Left ventricle myocardium superior (tissue), 1 donor: ENCODE measurements at regions of chr19 and their contacts with region 1.

Region 1: DNA sequence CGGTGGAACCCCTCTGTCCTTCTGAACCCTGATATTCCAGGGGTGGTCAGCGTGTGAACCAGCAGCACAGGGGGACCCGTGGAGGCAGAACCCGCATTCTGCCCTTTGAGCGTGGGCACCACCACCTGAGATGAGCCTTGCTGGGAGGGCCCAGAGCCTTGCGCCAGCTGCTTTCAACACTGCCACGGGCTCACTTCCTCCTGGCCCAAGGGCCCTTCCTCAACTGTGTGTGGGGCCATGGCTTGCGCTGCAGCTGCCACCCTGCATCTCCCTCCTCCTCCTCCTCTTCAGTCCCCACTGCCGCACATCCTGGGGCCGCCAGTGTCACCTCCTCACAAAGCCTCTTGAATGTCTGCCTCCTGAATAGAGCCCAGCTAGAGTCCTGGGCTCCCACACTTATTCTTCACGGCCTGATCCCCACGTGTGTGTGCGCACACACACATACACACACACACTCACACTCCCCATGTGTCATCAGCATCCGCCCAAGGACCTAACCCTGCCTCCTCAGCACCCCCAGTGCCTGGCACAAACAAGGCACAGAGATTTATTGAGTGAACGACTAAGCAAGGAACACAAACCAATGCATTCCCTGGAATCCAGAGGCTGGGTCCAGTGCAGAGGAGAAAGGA is 26.9 kb upstream of the TMEM160 start:
- DNase-seq: peak; percentile 45
- ATAC-seq: peak; percentile 12

Region 2: DNA sequence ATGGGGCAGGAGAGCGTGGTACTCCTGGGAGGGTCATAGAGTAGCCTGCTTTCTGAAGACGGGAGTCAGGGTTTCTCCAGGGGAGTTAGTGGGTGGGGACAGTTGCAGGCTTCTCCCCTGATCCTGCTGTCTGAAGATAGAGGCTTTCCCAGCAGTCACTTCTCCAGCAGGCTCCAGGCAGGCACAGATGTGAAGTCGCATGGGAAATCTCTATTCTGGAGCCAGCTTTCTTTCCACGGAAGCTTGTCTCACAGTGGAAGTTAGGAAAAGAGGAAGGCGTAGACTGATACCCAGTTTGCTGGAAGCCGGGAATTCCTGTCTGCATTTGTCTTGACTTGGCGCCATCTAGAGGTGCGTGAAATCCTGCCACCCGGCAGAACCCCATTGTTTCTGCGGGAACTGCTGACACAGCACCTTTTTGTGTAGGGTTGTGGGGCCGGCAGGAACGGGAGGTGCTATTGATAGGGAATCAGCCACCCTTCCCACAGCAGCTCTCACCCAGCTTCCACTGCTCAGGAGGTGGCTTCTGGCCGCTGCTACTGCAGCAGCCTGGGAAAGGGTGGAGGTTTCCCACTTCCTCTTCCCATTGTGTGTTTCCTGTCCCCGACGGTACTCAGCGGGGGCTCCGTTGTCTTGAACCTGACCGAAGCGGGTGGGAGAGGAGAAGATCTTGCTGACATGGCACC is 84.2 kb before region 1 on chr19:
- intact Hi-C with region 1: no loop called
- DNase-seq: peak; percentile 84
- ATAC-seq: peak; percentile 69

Region 3: DNA sequence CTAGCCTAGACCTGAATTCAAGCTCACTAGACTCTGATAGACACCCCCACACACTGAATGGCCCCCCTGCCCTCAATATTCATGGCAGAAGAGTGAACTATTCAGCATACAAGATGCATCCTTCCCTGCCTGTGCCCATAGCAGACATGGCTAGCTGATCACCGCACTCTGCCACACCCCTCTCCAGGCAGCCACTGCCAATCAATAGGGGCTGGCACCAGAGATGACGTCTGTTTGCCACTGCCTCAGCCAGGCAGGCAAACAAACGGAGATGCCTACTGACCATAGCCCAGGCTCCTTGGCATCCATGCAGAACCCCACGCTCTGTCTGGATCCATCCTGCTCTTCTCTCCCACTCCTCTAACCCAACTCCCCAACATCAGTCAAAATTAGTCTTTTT is 69.4 kb before region 1 on chr19:
- intact Hi-C with region 1: no loop called
- DNase-seq: no peak
- ATAC-seq: no peak

Region 4: GRCh38 chr19:47124937-47125668 is 49.8 kb after region 1 on chr19:
- intact Hi-C with region 1: loop called (anchors 2 kb)
- DNase-seq: no peak
- ATAC-seq: peak; percentile 73

Region 5: GRCh38 chr19:47143322-47144073 is 68.2 kb after region 1 on chr19:
- intact Hi-C with region 1: no loop called
- DNase-seq: no peak
- ATAC-seq: no peak